Posterior vena cava (tissue), 2 donors: ENCODE measurements at regions of chrX and their contacts with region 1.

Region 1: DNA sequence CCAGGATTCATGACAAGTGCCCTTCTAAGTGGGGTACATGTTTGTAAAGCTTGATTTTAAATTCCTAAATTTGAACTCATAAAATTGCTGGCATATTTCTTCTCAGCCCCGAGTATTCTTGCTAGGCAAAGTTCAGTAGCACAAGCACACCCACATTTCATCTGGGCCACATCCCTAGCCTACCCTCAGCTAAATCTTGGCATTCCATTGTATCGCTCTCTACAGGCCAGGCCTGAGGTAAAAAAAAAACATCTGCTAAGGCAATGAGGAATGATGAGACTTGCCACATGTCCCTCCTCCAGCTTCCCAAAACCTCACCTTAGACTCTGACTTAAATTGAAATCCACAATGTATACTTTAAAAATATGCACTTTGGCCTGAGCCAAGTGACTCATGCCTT is 51.4 kb upstream of the VCX3B start:
- DNase-seq: no peak

Region 2: DNA sequence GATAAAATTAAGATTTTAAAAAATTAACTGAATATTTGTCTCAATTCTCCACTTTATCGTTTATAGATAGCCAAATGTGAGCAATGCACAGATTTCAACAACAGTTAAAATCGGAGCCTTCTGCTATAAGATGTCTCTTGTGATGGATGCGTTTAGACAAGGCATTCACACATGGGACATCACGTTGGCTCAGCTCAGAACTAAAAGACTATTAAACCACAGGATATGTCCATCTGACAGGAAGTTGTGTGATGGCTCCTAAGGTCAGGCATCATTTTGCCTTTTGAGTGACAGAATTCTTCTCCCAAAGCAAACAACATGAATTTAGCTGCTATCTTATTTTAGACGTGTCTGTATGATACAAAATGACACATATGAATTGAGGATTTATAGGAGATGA is 34.1 kb after region 1 on chrX:
- intact Hi-C with region 1: loop called in 1 of 2 experiments (anchors 2 kb)
- DNase-seq: no peak